ENCODE measurements at regions of chr2 and their contacts with region 1.

Region 1: DNA sequence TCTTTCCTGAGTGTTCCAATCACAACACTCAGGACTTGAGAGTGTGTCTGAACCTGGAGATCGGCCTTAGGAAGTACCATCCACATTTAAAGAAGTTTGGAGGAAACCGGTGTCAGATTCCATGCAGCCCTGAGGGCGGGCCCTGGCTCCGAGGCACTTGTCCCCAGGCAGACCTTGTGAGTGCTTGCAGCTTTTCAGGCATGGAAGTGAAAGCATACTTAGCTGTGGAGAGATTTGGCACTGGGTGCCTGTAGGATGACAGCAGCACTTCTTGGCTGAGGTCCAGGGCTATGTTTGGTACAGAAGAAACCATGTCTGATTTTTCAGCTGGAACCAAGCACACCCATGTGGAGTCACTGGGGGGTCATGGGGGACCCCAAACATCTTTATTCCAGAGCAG is 230.8 kb downstream of the SEPTIN10 start:
- DNase-seq: peak; percentile 16 to 54 (median 35)
- H3K4me3 ChIP-seq: no peak overlapping the region
- H3K27ac ChIP-seq: no peak overlapping the region
- H3K4me1 ChIP-seq: peaks cover 10% of the 10 kb centered on the region
- H3K27me3 ChIP-seq: no peaks in the 10 kb centered on the region
- CTCF ChIP-seq: no peak
- EP300 ChIP-seq: no peak
- POLR2A ChIP-seq: no peak

Region 2: GRCh38 chr2:109046925-109047508 is 335.9 kb before region 1 on chr2:
- intact Hi-C with region 1: no loop called
- DNase-seq: no peak
- H3K4me3 ChIP-seq: no peak overlapping the region
- H3K27ac ChIP-seq: no peak overlapping the region
- H3K4me1 ChIP-seq: no peaks in the 10 kb centered on the region
- H3K27me3 ChIP-seq: no peaks in the 10 kb centered on the region
- CTCF ChIP-seq: no peak
- EP300 ChIP-seq: no peak
- POLR2A ChIP-seq: no peak

Region 3: DNA sequence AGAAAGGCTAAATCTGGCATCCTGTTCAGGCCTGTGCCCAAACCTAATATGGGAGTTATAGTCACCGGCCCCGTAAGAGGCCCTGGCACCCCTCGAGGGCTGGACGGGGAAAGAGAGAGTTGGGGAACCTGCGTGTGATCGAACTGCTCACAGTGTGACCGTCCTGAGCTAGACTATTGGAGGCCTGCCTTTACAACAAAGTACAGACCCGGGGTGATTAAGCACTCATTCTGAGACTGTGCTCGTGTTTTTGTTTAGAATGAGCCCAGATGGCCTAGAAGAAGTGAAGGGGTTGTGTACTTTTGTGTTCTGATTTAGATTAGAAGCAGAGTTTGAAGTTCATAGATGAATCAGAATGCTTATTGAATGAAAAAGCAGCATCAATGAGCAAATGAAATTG is 1464.7 kb after region 1 on chr2:
- intact Hi-C with region 1: loop called in 1 of 4 experiments (anchors 5 kb)
- DNase-seq: no peak
- H3K4me3 ChIP-seq: no peak overlapping the region
- H3K27ac ChIP-seq: no peak overlapping the region
- H3K4me1 ChIP-seq: no peaks in the 10 kb centered on the region
- H3K27me3 ChIP-seq: no peaks in the 10 kb centered on the region
- CTCF ChIP-seq: no peak
- EP300 ChIP-seq: no peak
- POLR2A ChIP-seq: no peak